ENCODE measurements at regions of chr1 and their contacts with region 1.

Region 1: GRCh38 chr1:35882945-35883634 is at the start of gene AGO1:
- DNase-seq: peak; percentile 37
- H3K4me3 ChIP-seq: peak within 1 kb of the TSS; percentile 76
- H3K27me3 ChIP-seq: peaks cover 1% of the 10 kb centered on the region; the same call in 1 of the 2 replicates
- CTCF ChIP-seq: peak; percentile 90
- polyA plus RNA-seq, gene AGO1: 10.7 and 13.1 TPM in 2 replicates

Region 2: DNA sequence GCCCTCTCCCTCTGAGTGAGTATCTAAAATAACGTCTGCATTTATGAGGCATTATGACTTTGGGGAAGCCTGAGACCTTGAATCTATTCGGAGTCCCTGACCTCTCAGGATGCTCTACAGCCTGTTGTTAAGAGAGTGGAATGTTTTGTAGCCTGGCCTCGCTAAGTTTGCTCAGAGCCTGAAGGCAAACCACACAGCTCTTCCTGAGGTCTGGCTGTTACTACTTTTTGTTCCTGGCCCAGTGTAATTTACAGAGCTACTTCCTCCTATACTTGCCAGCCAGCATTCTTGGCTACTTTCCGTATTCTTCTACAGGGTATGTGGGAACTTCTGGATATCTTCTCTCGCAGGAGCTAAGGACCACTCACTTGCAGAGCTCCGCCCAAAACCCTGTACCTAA is 618.2 kb before region 1 on chr1:
- CTCF ChIA-PET with region 1: no interaction called
- POLR2A ChIA-PET with region 1: no interaction called
- DNase-seq: peak; percentile 57
- H3K4me3 ChIP-seq: no peak overlapping the region
- H3K27me3 ChIP-seq: no peaks in the 10 kb centered on the region
- CTCF ChIP-seq: no peak

Region 3: DNA sequence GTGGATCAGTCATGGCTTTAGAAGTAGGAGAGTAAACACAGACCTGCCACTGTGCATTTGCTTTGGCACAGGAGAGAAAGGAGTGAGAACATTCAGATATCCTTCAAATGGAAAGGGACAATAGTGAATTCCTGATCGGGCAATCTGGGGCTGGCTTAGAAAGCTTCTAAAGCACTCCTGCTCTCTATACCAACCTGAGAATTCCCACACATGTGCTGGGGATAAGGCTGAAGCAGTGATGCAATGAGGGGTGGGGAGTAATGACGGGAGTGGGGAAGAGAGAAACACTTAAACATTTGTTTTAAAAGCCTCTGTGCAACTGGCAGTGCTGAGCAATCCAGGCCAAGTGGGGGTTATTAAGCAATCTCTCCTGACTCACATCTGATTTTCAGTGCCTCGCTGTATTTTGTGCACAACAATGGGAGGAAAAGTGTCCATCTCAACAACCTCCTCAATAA is 434.7 kb before region 1 on chr1:
- CTCF ChIA-PET with region 1: no interaction called
- POLR2A ChIA-PET with region 1: no interaction called
- DNase-seq: peak; percentile 94
- H3K4me3 ChIP-seq: no peak overlapping the region
- H3K27me3 ChIP-seq: no peaks in the 10 kb centered on the region
- CTCF ChIP-seq: no peak

Region 4: DNA sequence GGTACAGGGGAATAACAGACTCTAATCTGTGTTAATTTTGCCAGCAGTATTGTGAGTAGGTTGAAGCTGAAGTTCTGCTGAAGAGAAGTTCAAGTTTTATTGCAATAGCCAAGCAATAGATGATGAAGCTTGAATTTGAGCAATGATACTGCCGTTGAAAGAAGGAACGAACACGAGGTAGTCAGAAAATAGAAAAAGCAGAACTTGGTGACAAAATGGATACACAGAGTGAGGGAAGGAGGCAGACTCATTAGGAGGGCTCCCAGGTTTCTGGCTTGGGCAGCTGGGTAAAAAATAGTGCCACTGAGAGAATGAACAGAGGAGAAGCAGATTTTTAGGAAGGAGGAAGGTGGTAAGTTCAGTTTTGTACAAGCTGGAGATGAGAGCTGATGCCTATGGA is 22.4 kb before region 1 on chr1:
- CTCF ChIA-PET with region 1: interaction called, 18 read pairs
- POLR2A ChIA-PET with region 1: no interaction called
- DNase-seq: no peak
- H3K4me3 ChIP-seq: no peak overlapping the region
- H3K27me3 ChIP-seq: no peaks in the 10 kb centered on the region
- CTCF ChIP-seq: no peak

Region 5: GRCh38 chr1:35894656-35895055 is 11.6 kb after region 1 on chr1:
- CTCF ChIA-PET with region 1: interaction called, 15 read pairs
- POLR2A ChIA-PET with region 1: no interaction called
- DNase-seq: no peak
- H3K4me3 ChIP-seq: no peak overlapping the region
- H3K27me3 ChIP-seq: no peaks in the 10 kb centered on the region
- CTCF ChIP-seq: no peak

Region 6: DNA sequence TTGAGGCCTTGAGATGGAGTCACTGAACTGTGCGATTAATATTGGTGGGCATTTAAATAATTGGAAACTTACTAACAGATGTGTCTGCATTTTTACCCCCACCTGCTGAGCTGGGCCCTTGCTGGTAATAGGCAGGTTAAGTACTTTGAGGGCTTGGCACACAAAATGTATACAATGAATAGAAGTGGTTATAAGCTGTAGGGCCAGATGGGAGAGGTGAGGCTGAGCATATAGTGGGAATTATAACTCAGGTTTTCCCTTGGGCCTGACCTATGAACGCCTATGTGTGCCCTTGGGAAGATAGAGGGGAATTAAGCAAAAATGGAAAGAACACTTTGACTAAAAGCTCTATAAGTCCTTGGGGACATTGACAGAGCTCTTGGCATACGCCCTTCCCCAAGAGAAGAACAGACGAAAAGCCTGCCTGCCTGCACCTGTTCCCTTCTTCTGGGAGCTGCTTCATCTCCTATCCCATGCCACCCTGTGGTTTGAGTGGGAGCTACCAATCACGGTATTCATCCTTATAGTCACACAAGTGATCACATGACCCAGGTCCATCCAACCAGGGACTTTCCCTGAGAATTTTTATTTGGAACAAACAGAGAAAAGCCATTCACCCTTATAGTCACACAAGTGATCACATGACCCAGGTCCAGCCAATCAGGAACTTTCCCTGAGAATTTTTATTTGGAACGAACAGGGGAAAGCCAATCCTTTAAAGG is 860.4 kb after region 1 on chr1:
- CTCF ChIA-PET with region 1: no interaction called
- POLR2A ChIA-PET with region 1: no interaction called
- DNase-seq: no peak
- H3K4me3 ChIP-seq: no peak overlapping the region
- H3K27me3 ChIP-seq: no peaks in the 10 kb centered on the region
- CTCF ChIP-seq: no peak

Measured in BJ (cell line).